Activated CD8-positive, alpha-beta T cell treated with anti-CD3 and anti-CD28 coated beads for 36 hours (primary cell): ENCODE measurements at regions of chr5 and their contacts with region 1.

Region 1: GRCh38 chr5:134225618-134226440 is at the start of gene PPP2CA:
- DNase-seq: peak; percentile 98
- ATAC-seq: peak; percentile 90
- H3K4me3 Mint-ChIP-seq: peak within 1 kb of the TSS; percentile 98
- H3K27ac Mint-ChIP-seq: peak within 1 kb of the TSS; percentile 99
- H3K4me1 Mint-ChIP-seq: peaks cover 34% of the 10 kb centered on the region
- H3K27me3 Mint-ChIP-seq: no peaks in the 10 kb centered on the region
- CTCF ChIP-seq: no peak
- total RNA-seq, gene PPP2CA: 147 to 153 TPM

Region 2: GRCh38 chr5:134209477-134210240 is 16.2 kb before region 1 on chr5:
- CTCF ChIA-PET with region 1: interaction called, 4 read pairs
- POLR2A ChIA-PET with region 1: interaction called, 16 read pairs
- intact Hi-C with region 1: no loop called
- DNase-seq: no peak
- ATAC-seq: no peak
- H3K4me3 Mint-ChIP-seq: no peak overlapping the region
- H3K27ac Mint-ChIP-seq: peak overlapping the region; percentile 9
- H3K4me1 Mint-ChIP-seq: peaks cover 53% of the 10 kb centered on the region
- H3K27me3 Mint-ChIP-seq: no peaks in the 10 kb centered on the region
- CTCF ChIP-seq: no peak

Region 3: DNA sequence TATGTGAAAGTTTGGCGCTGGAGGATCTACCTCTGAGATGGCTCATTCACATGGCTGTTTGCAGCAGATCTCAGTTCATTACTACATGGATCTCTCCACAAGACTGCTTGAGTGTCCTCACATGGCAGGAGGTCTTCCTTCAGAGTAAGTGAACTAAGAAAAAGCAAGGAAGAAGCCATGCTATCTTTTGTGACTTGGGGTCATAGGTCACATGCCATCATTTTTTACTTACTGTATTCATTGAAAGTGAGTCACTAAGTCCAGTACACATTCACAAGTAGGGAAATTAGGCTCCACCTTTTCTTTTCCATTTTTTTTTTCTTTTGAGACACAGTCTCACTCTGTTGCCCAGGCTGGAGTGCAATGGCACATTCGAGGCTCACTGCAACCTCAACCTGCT is 194.5 kb after region 1 on chr5:
- CTCF ChIA-PET with region 1: no interaction called
- POLR2A ChIA-PET with region 1: no interaction called
- intact Hi-C with region 1: no loop called
- DNase-seq: no peak
- ATAC-seq: no peak
- H3K4me3 Mint-ChIP-seq: no peak overlapping the region
- H3K27ac Mint-ChIP-seq: no peak overlapping the region
- H3K4me1 Mint-ChIP-seq: no peaks in the 10 kb centered on the region
- H3K27me3 Mint-ChIP-seq: no peaks in the 10 kb centered on the region
- CTCF ChIP-seq: no peak